Mammary epithelial cell (primary cell): ENCODE measurements at regions of chr5 and their contacts with region 1.

Region 1: GRCh38 chr5:138077065-138077696 is 6.7 kb upstream of the WNT8A start:
- DNase-seq: peak; percentile 46
- H3K4me3 ChIP-seq: no peak overlapping the region
- H3K27ac ChIP-seq: no peak overlapping the region
- H3K4me1 ChIP-seq: no peaks in the 10 kb centered on the region
- H3K27me3 ChIP-seq: no peaks in the 10 kb centered on the region
- CTCF ChIP-seq: peak; percentile 84 to 89

Region 2: DNA sequence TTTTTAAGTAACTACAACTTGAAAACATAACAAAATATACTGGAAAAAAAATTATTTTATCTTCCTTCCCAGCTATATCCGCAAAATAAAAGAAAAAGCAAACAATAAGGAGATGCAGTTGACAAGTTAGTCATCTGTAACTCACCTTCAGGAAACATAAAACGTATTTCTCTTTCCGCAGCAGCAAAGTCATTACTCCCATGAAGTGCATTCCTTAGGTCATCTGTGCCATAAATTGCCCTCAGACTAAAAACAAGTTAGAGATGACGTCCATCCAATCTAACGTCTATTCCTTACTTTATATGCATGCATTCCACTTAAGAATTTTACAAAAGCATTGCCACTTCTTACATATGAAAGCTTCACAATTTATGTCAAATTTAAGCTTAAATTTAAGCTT is 51.2 kb after region 1 on chr5:
- CTCF ChIA-PET with region 1: interaction called, 10 read pairs
- dilution Hi-C with region 1: no loop called
- in situ Hi-C with region 1: no loop called
- intact Hi-C with region 1: loop called (anchors 1 kb)
- DNase-seq: no peak
- H3K4me3 ChIP-seq: no peak overlapping the region
- H3K27ac ChIP-seq: no peak overlapping the region
- H3K4me1 ChIP-seq: no peaks in the 10 kb centered on the region
- H3K27me3 ChIP-seq: no peaks in the 10 kb centered on the region
- CTCF ChIP-seq: no peak

Region 3: GRCh38 chr5:138169124-138169523 is 91.9 kb after region 1 on chr5:
- CTCF ChIA-PET with region 1: no interaction called
- dilution Hi-C with region 1: loop called (anchors 5 kb)
- in situ Hi-C with region 1: no loop called
- intact Hi-C with region 1: no loop called
- DNase-seq: no peak
- H3K4me3 ChIP-seq: no peak overlapping the region
- H3K27ac ChIP-seq: no peak overlapping the region
- H3K4me1 ChIP-seq: no peaks in the 10 kb centered on the region
- H3K27me3 ChIP-seq: no peaks in the 10 kb centered on the region
- CTCF ChIP-seq: no peak